Prostate gland (tissue), 2 donors: ENCODE measurements at regions of chr9 and their contacts with region 1.

Region 1: DNA sequence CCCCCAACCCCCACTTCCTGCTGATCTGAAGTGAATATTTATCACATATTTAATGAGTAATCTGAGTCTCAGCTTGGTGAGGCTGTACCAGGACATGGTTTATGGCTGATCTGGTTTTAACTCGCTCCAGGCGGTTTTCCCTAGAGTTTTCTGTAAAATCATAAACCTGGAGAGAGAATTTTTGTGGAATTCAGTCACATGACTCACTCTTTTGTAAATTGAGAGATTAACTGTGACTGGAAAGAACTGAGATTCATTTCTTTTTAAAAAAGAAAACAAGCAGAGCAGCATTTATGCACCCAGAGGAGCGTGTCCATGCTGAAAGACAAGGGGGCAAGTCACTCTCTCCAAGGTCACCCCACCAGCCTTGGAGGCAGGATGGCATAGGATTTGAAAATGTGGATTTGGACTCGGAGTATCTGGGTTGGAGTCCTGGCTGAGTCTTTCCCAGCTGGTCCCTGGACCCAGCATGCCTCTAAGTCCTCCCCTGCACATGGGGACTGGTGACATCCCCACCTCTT is 81.8 kb downstream of the ZNF618 start:
- DNase-seq: no peak
- H3K4me3 ChIP-seq: no peak overlapping the region
- H3K27ac ChIP-seq: peak overlapping the region; percentile 1 to 29
- H3K4me1 ChIP-seq: no peaks in the 10 kb centered on the region
- H3K27me3 ChIP-seq: no peaks in the 10 kb centered on the region
- CTCF ChIP-seq: no peak
- POLR2A ChIP-seq: no peak

Region 2: DNA sequence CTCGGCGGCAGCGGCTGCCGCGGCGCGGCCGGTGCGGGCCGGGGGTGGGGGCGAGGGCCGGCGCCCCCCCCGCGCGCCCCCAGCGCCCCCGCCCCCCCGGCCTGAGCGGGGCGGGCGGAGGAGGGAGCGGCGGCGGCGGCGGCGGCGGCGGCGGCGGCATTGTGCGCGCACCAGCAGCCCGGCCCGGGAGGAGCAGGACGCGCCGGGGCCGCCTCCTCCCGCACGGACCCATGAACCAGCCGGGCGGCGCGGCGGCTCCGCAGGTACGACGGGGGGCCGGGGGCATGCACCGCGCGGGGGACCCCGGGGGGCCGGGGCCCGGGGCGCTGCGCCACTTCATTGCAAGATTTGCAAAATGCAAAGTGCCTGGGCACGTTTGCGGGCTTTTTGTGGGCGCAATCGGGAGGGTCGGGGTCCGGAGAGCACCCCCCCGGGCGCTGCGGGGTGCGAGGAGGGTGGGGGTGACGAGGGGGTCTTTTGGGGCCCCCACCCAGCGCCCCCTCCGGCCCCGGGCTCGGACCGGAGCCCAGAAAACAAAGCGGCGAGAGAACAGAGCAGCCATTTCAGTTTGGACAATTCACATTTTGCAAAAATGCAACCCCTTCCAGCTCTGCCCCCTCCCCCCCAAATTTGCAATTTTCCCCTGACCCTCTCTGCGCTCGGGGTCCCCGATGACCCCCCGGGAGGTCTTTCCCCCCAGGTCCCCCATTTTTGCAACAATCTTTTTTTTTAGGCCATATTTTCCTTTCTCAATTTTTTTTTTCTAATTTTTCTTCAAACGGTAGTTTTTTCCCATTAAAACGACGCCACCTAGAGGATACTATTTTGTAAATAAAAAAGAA is 81.5 kb before region 1 on chr9 and contains the start of gene ZNF618:
- intact Hi-C with region 1: loop called (anchors 10 kb)
- DNase-seq: no peak
- H3K4me3 ChIP-seq: peak within 1 kb of the TSS; percentile 85 to 91
- H3K27ac ChIP-seq: peak within 1 kb of the TSS; percentile 65 to 66
- H3K4me1 ChIP-seq: no peaks in the 10 kb centered on the region
- H3K27me3 ChIP-seq: no peaks in the 10 kb centered on the region
- CTCF ChIP-seq: peak in 1 of 4 experiments; percentile 66
- POLR2A ChIP-seq: no peak
- total RNA-seq, gene ZNF618: 4.6 to 11.3 TPM

Region 3: DNA sequence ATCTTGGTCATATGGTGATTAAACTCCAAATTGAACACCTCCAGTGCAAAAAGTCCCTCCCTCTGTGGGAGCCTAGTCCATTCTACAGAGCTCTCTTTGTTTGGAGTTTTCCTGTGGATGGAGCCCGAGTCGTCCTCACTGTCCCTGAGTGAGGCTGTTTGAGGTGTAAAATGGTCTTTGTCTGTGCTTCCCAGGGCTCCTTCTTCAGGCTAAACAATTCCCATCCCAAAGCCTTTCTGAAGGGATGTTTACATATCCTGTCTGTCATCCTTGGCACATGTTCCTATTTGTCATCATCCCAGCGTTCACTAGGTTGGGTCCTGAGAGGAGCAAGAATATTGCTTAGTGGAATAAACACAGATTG is 266.3 kb after region 1 on chr9:
- intact Hi-C with region 1: no loop called
- DNase-seq: no peak
- H3K4me3 ChIP-seq: no peak overlapping the region
- H3K27ac ChIP-seq: no peak overlapping the region
- H3K4me1 ChIP-seq: no peaks in the 10 kb centered on the region
- H3K27me3 ChIP-seq: no peaks in the 10 kb centered on the region
- CTCF ChIP-seq: no peak
- POLR2A ChIP-seq: no peak